Activated naive CD4-positive, alpha-beta T cell treated with anti-CD3 and anti-CD28 coated beads for 36 hours (primary cell): ENCODE measurements at regions of chrX and their contacts with region 1.

Region 1: DNA sequence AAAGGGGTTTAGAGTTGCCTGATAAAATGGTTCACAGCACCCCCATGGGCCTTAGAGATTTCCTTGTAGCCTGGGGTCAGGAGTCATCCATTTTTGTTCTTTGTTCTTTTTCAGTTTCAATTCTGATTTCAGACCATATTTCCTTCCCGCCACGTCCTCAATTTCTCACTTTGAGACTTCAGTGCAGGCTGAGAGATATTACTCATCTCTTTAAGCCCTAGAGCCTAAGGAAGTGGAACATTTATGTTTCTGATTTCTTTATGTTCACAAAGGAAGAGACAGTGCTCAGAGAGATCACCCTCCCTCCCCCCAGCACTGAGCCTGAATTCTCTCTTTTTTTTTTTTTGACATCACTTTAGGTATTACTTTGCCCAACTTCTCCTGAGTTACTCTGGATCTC is 56.3 kb downstream of the MSN start:
- DNase-seq: peak; percentile 60
- H3K4me3 Mint-ChIP-seq: peak overlapping the region; percentile 29
- H3K27ac Mint-ChIP-seq: peak overlapping the region; percentile 88
- H3K4me1 Mint-ChIP-seq: peaks cover 88% of the 10 kb centered on the region
- H3K27me3 Mint-ChIP-seq: no peaks in the 10 kb centered on the region

Region 2: GRCh38 chrX:65667503-65668376 is 56.0 kb before region 1 on chrX and contains the start of gene MSN:
- CTCF ChIA-PET with region 1: no interaction called
- intact Hi-C with region 1: loop called (anchors 1 kb)
- DNase-seq: peak; percentile 78
- H3K4me3 Mint-ChIP-seq: peak within 1 kb of the TSS; percentile 94
- H3K27ac Mint-ChIP-seq: peak within 1 kb of the TSS; percentile 94
- H3K4me1 Mint-ChIP-seq: peaks cover 23% of the 10 kb centered on the region
- H3K27me3 Mint-ChIP-seq: no peaks in the 10 kb centered on the region
- total RNA-seq, gene MSN: 482 to 507 TPM

Region 3: GRCh38 chrX:65679071-65679540 is 44.6 kb before region 1 on chrX:
- CTCF ChIA-PET with region 1: no interaction called
- intact Hi-C with region 1: loop called (anchors 1 kb)
- DNase-seq: no peak
- H3K4me3 Mint-ChIP-seq: no peak overlapping the region
- H3K27ac Mint-ChIP-seq: peak overlapping the region; percentile 91
- H3K4me1 Mint-ChIP-seq: peaks cover 86% of the 10 kb centered on the region
- H3K27me3 Mint-ChIP-seq: no peaks in the 10 kb centered on the region

Region 4: DNA sequence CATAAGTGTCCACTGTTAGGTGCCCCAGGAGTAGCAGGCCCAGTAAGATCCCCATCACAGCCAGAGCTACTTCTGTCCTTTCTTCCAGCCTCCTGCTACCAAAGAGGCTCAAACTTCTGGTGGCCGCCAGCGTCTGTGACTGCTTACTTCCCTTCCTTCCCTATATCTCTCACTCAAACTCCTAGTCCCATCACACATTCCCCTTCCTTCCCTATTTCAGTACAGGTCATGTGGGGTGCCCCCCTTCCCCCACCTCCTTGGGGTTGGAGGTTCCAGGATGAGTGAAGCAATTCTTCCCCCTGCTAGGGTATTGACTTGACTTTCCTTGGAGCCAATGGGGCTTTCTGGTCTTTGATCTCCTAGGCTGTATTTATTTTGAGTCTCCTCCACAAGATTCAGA is 316.2 kb after region 1 on chrX and contains the start of gene VSIG4:
- CTCF ChIA-PET with region 1: no interaction called
- intact Hi-C with region 1: no loop called
- DNase-seq: no peak
- H3K4me3 Mint-ChIP-seq: no peak within 1 kb of the TSS
- H3K27ac Mint-ChIP-seq: no peak within 1 kb of the TSS
- H3K4me1 Mint-ChIP-seq: peaks cover under 1% of the 10 kb centered on the region
- H3K27me3 Mint-ChIP-seq: no peaks in the 10 kb centered on the region
- total RNA-seq, gene VSIG4: not detected